A549 (cell line): ENCODE measurements at regions of chr2 and their contacts with region 1.

Region 1: DNA sequence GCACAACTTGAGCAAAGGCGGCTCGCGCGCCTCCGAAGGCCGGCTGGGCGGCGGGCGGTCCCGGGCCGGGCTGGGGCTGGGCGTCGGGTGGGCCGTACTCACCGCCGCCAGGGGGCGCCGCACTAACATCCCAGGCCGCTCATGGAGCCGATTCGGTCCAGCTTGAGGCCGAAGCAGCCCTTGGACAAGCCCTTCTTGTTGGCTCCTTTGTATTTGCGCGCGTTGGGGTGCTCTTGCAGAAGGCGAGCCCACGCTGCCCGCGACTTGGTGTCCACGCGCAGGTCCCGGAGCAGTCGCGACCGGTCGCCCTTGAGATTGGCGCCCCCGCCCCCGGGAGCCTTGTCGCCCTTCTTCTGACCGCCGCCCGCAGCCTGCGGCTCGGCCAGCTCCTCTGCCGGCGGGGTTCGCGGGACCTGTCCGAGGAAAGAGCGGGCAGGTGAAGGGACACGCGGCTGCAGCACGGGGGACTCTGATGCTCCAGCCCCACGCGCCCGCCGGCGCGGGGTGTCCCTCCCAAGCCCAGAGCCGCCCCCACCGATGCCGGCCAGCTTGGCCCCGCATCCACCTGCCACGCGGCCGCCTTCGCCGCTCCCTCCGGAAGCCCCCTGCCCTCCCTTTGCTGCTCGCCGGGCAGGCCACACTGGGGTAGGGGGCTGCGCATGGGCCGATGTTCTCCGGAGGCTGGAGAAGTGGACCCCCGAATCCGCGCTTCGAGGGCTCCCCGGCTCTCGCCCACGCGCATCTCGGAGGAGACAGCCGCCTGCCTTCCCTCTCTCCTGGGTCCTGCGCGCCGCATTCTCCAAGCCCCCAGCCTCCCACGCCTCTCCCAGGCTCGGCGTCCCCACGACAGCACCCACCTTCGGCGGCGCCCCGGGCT is 655 bp downstream of the NPPC start:
- DNase-seq: peak; percentile 86 to 88
- ATAC-seq: peak; percentile 79 to 93
- H3K4me3 ChIP-seq: peak overlapping the region; percentile 47
- H3K27ac ChIP-seq: peak overlapping the region in 1 of 2 experiments; percentile 69; a peak in 3 of 6 replicates
- H3K4me1 ChIP-seq: peaks cover 4% of the 10 kb centered on the region; the same call in 1 of the 3 replicates
- CTCF ChIP-seq: peak; percentile 94
- EP300 ChIP-seq: no peak
- POLR2A ChIP-seq: no peak
- RAD21 ChIP-seq: peak; percentile 65 to 86

Region 2: GRCh38 chr2:232142049-232142448 is 216.5 kb after region 1 on chr2:
- CTCF ChIA-PET with region 1: interaction called, 81 read pairs
- POLR2A ChIA-PET with region 1: interaction called, 3 read pairs
- DNase-seq: peak; percentile 13 to 40
- ATAC-seq: peak; percentile 74 to 89
- H3K4me3 ChIP-seq: no peak overlapping the region
- H3K27ac ChIP-seq: no peak overlapping the region
- H3K4me1 ChIP-seq: no peaks in the 10 kb centered on the region
- CTCF ChIP-seq: peak; percentile 90
- EP300 ChIP-seq: no peak
- POLR2A ChIP-seq: no peak
- RAD21 ChIP-seq: peak; percentile 74 to 82

Region 3: DNA sequence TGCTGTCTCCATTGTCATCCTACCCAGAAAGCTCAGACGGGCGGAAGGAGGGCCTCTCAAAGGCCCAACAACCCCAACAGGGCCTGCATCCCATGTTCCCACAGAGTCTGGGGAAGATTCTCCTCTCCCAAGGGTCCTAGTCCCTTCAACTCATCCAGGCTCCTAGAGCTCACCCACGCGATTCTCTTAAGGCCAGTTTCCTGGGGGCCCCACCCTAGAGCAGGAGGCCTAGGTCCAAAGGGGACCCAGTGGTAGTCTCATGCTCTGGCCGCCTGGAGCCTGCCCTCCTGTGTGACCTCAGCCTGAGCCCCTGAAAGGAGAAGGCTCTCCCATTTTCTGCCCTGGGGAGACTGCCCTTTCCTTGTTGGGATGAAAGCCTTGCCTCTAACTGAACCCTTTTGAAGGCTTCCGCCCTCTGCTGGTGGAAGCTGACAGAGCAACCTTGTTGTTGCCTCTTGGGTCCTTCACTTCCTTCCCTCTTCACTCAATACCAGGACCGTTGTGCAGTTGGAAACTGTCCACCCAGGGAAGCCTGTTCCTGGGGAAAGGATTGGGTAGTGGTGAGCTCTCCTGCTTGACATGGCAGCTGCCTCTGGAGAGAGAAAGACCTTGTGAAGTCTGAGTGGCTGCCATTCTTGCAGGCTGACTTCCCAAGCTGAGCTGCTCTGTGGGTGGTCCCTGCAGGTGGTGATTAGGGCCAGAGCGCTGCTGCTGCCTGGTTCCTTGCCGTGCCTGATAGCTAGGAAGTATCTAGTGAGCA is 367.0 kb after region 1 on chr2:
- CTCF ChIA-PET with region 1: interaction called, 17 read pairs
- POLR2A ChIA-PET with region 1: no interaction called
- DNase-seq: peak; percentile 47 to 64
- ATAC-seq: peak; percentile 82 to 95
- H3K4me3 ChIP-seq: no peak overlapping the region
- H3K27ac ChIP-seq: no peak overlapping the region
- H3K4me1 ChIP-seq: no peaks in the 10 kb centered on the region
- CTCF ChIP-seq: peak; percentile 62
- EP300 ChIP-seq: no peak
- POLR2A ChIP-seq: no peak
- RAD21 ChIP-seq: peak; percentile 36 to 49; a peak in 4 of 5 replicates

Region 4: GRCh38 chr2:232315049-232315922 is 389.7 kb after region 1 on chr2:
- CTCF ChIA-PET with region 1: interaction called, 154 read pairs
- POLR2A ChIA-PET with region 1: no interaction called
- DNase-seq: no peak
- ATAC-seq: no peak; a peak in 1 of 6 replicates
- H3K4me3 ChIP-seq: no peak overlapping the region
- H3K27ac ChIP-seq: no peak overlapping the region
- H3K4me1 ChIP-seq: no peaks in the 10 kb centered on the region
- CTCF ChIP-seq: no peak
- EP300 ChIP-seq: no peak
- POLR2A ChIP-seq: no peak
- RAD21 ChIP-seq: no peak

Region 5: GRCh38 chr2:232333361-232334270 is 408.1 kb after region 1 on chr2:
- CTCF ChIA-PET with region 1: interaction called, 154 read pairs
- POLR2A ChIA-PET with region 1: no interaction called
- DNase-seq: peak; percentile 19 to 33
- ATAC-seq: peak in 1 of 2 experiments; percentile 71; a peak in 3 of 6 replicates
- H3K4me3 ChIP-seq: no peak overlapping the region
- H3K27ac ChIP-seq: 0 out of 6 replicates have a peak overlapping the region, but pooled peaks of 1 of the 2 experiments have one; percentile 10
- H3K4me1 ChIP-seq: no peaks in the 10 kb centered on the region
- CTCF ChIP-seq: peak; percentile 52
- EP300 ChIP-seq: no peak
- POLR2A ChIP-seq: no peak
- RAD21 ChIP-seq: no peak